Heart left ventricle (tissue), 16 donors: ENCODE measurements at regions of chr11 and their contacts with region 1.

Region 1: DNA sequence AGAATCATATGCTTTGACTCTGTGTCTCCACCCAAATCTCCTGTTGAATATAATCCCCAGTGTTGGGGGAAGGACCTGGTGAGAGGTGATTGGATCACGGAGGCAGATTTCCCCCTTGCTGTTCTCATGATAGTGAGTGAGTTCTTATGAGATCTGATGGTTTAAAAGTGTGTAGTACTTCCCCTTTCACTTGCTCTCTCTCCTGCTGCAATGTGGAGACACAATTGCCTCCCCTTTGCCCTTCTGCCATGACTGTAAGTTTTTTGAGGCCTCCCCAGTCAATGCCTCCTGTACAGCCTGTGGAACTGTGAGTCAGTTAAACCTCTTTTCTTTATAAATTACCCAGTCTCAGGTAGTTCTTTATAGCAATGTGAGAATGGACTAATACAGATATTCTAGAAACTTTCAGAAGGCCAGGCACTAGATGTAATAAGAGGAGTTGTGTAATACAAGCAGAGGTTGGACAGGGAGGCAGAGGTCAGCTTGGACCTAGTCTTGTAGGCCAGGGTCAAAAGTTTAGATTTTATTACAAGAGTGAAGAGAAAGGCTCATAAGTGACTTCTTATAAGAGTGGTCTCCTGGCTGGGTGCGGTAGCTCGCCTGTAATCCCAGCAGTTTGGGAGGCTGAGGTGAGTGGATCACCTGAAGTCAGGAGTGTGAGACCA is 9.3 kb upstream of the SERPING1 start:
- DNase-seq: no peak
- ATAC-seq: no peak
- H3K4me3 ChIP-seq: no peak overlapping the region
- H3K27ac ChIP-seq: no peak overlapping the region
- H3K4me1 ChIP-seq: peaks cover 0 to 5% (median 0%) of the 10 kb centered on the region in 12 donors
- H3K27me3 ChIP-seq: peaks cover 0 to 4% (median 0%) of the 10 kb centered on the region in 9 donors
- CTCF ChIP-seq: no peak
- POLR2A ChIP-seq: no peak

Region 2: GRCh38 chr11:57406337-57406904 is 181.8 kb before region 1 on chr11:
- intact Hi-C with region 1: no loop called
- DNase-seq: peak; percentile 34 to 71 (median 38)
- ATAC-seq: peak; percentile 55 to 93 (median 78)
- H3K4me3 ChIP-seq: no peak overlapping the region
- H3K27ac ChIP-seq: peak overlapping the region in 11 of 12 donors; percentile 33 to 75 (median 69)
- H3K4me1 ChIP-seq: peaks cover 4 to 32% (median 22%) of the 10 kb centered on the region in 12 donors
- H3K27me3 ChIP-seq: no peaks in the 10 kb centered on the region
- CTCF ChIP-seq: no peak
- POLR2A ChIP-seq: no peak

Region 3: DNA sequence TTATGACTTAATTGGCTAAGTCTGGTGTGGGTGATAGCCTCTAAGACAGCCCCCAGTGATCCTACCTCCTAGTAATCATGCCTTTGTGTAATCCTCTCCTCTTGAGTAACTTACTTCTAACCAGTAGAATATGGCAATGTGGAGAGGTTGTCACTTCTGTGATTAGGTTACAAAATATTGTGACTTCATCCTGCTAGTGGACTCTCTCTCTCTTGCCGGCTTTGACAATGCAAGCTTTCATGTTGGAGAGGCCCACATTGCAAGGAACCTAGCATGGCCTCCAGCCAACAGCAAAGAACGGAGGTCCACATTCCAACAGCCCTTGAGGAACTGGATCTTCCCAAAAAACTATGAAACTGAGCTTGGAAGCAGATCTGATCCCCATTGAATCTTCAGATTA is 42.0 kb after region 1 on chr11:
- intact Hi-C with region 1: loop called in 1 of 10 experiments (anchors 5 kb)
- DNase-seq: no peak
- ATAC-seq: no peak
- H3K4me3 ChIP-seq: no peak overlapping the region
- H3K27ac ChIP-seq: no peak overlapping the region
- H3K4me1 ChIP-seq: no peaks in the 10 kb centered on the region
- H3K27me3 ChIP-seq: no peaks in the 10 kb centered on the region
- CTCF ChIP-seq: no peak
- POLR2A ChIP-seq: no peak